Left ventricle myocardium inferior (tissue), 1 donor: ENCODE measurements at regions of chr20 and their contacts with region 1.

Region 1: DNA sequence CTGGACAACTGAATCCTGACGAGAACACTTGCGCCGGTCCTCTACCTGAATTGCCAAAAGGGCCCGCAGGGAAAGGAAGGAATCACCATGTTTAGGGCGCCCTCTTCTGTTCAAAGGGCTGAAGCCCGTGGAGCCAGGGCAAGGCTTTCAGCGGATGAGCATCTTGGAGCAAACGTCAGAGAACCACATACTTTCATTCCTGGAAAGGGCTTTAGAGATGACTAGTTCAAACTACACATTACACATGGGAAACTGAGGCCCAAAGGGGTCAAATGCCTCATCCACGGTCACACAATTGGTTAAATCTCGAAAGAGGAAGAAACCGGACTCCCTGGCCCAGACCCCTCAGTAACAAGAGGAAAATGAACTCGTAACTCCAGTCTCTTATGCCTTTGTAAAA is 11.5 kb upstream of the ZNF133 start:
- DNase-seq: peak; percentile 37
- H3K4me3 ChIP-seq: no peak overlapping the region
- H3K27ac ChIP-seq: no peak overlapping the region
- H3K4me1 ChIP-seq: no peaks in the 10 kb centered on the region
- H3K27me3 ChIP-seq: peaks cover 89% of the 10 kb centered on the region
- CTCF ChIP-seq: peak; percentile 74

Region 2: DNA sequence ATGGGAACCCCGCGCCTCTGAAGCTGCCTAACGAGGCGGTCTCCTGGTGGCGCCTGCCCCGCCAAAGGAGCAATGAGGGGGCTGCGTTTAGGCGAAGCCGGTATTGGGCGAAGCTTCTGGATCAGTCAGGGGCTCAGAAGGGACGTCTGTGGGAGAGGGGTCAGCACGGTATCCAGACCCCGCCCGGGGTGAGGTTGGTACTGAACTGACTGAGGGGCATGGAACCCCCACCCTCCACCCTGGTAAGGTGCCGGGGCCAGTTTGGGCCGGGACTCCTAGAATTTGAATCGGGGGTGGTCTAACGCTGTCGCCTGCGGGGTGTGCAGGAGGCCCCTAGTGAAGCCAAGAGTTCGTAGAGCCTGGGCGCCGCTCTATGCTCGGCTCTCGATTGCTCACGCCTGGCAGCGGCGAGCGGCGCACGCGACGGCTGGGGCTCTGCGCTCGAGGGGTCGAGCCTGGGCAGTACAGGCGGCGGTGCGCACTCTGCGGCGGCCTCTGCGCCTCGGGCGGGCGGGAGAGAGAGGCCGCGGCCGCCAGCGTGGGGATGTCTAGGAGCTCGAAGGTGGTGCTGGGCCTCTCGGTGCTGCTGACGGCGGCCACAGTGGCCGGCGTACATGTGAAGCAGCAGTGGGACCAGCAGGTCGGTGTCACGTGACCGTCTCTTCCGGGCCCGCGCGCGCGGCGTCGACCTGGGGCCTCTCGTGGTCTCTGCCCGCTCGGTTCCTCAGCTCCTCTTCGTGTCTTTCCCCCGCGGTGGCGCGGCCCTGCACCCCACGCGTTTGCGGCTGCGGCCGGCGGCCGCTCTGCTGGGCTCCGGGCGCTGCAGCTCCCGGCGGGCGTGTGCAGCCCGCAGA is 139.2 kb before region 1 on chr20 and contains the starts of genes KAT14 and PET117:
- intact Hi-C with region 1: loop called (anchors 10 kb)
- DNase-seq: peak; percentile 92
- H3K4me3 ChIP-seq: peak within 1 kb of the TSS; percentile 95
- H3K27ac ChIP-seq: peak within 1 kb of the TSS; percentile 95
- H3K4me1 ChIP-seq: peaks cover 40% of the 10 kb centered on the region
- H3K27me3 ChIP-seq: no peaks in the 10 kb centered on the region
- CTCF ChIP-seq: no peak
- total RNA-seq, gene KAT14: 10.7 TPM
- total RNA-seq, gene PET117: 9.1 TPM